ENCODE measurements at regions of chr1 and their contacts with region 1.

Region 1: GRCh38 chr1:196148367-196148970 is 459.8 kb downstream of the KCNT2 start:
- DNase-seq: no peak
- H3K4me3 ChIP-seq: no peak overlapping the region
- CTCF ChIP-seq: peak; percentile 17

Region 2: GRCh38 chr1:196160066-196160795 is 11.8 kb after region 1 on chr1:
- CTCF ChIA-PET with region 1: interaction called, 19 read pairs
- POLR2A ChIA-PET with region 1: no interaction called
- DNase-seq: no peak
- H3K4me3 ChIP-seq: no peak overlapping the region
- CTCF ChIP-seq: no peak

Region 3: GRCh38 chr1:196309386-196309785 is 160.9 kb after region 1 on chr1:
- CTCF ChIA-PET with region 1: interaction called, 119 read pairs
- POLR2A ChIA-PET with region 1: no interaction called
- DNase-seq: no peak
- H3K4me3 ChIP-seq: no peak overlapping the region
- CTCF ChIP-seq: no peak

Region 4: GRCh38 chr1:196317535-196318522 is 169.4 kb after region 1 on chr1:
- CTCF ChIA-PET with region 1: interaction called, 119 read pairs
- POLR2A ChIA-PET with region 1: no interaction called
- DNase-seq: peak; percentile 3
- H3K4me3 ChIP-seq: no peak overlapping the region
- CTCF ChIP-seq: peak; percentile 64

Region 5: GRCh38 chr1:196660852-196661251 is 512.4 kb after region 1 on chr1:
- CTCF ChIA-PET with region 1: interaction called, 34 read pairs
- POLR2A ChIA-PET with region 1: no interaction called
- DNase-seq: no peak
- H3K4me3 ChIP-seq: no peak overlapping the region
- CTCF ChIP-seq: peak; percentile 9

Measured in AG04449 (cell line).